Right ventricle myocardium inferior (tissue), 1 donor: ENCODE measurements at regions of chr10 and their contacts with region 1.

Region 1: GRCh38 chr10:73644015-73644743 is 2.9 kb upstream of the MYOZ1 start:
- DNase-seq: no peak
- ATAC-seq: peak; percentile 31

Region 2: DNA sequence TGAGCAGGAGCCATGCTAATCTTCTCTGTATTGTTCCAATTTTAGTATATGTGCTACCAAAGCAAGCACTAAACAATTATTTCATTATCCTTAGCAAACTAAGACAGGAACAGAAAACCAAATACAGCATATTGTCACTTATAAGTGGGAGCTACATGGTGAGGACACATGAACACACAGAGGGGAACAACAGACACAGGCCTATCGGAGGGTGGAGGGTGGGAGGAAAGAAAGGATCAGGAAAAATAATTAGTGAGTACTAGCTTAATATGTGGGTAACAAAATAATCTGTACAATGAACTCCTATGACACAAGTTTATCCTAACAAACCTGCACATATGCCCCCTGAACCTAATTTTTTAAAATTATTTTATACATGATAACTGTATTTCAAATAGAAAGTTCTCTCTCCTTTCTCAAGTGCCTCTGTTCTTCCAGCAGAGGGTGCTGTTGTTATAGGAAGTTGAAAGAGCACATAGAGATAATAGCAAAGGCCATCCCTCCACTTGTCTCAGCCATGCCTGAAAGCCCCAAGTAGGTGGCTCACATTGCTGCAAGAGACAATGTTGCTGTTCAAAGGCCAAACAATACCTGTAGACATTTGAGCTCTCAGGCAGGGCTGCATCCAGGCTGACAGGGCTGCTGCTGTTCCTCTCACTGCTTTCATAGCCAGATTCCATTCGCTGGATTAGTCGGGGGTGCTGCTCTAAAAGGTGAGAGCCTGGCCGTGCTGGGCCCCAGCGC is 114.9 kb before region 1 on chr10:
- intact Hi-C with region 1: loop called (anchors 1 kb)
- DNase-seq: no peak
- ATAC-seq: peak; percentile 80

Region 3: GRCh38 chr10:73591935-73592699 is 52.1 kb before region 1 on chr10:
- intact Hi-C with region 1: no loop called
- DNase-seq: no peak
- ATAC-seq: peak; percentile 80

Region 4: DNA sequence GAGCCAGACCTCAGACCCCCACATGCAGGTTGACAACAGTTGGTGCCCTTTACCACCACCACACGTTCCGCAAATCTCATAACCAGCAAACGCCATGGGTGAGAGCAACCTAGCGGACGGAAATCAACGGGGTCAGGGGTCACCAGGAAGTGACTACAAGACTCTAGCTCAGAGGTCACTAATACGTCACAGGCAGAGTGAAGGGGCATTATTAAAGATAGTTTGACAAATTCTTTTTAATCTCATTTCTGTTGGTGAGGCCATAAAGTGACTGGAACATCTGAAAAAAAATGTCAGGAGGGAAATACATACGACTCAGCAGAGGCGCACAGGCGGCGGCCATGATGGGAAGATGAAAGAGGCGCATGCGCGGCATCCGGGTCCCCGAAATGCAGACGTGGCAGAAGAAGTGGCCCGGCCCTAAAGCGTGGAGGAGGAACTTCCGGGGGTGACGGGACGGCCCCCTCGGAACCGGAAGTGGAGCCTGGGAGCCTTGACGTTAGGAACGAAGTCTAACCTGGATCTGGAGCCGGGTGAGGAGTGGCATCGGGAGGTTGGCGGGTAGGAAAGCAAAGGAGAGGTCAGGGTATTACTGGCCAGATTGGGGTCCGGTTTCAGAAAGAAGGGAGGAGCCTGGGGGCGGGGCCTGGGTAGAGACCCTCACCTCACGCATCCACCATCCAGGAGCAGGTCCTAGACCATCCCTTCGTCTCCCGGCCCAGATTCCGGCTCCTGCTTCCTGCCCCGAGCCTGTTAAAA is 99.9 kb after region 1 on chr10 and contains the start of gene SEC24C:
- intact Hi-C with region 1: loop called (anchors 5 kb)
- DNase-seq: peak; percentile 98
- ATAC-seq: peak; percentile 96
- total RNA-seq, gene SEC24C: 46.4 TPM

Region 5: DNA sequence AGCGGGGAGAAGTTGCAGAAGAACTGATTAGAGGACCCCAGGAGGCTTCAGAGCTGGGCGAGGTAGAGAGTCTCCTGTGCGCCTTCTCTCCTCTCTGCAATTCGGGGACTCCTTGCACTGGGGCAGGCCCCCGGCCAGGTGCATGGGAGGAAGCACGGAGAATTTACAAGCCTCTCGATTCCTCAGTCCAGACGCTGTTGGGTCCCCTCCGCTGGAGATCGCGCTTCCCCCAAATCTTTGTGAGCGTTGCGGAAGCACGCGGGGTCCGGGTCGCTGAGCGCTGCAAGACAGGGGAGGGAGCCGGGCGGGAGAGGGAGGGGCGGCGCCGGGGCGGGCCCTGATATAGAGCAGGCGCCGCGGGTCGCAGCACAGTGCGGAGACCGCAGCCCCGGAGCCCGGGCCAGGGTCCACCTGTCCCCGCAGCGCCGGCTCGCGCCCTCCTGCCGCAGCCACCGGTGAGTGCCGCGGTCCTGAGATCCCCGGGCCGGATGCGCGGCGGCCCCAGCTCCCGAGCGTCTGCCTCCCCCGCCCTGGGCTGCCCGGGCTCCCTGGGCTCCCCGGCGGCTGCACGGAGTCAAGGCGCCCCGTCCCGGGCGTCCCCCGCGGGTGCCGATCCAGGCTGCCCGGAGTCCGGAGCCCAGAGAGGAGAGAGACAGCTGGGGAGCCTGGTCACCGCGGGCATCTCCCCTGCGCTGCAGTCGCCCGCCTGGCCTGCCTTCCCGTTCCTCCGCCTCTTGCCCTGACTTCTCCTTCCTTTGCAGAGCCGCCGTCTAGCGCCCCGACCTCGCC is 266.8 kb after region 1 on chr10 and contains the start of gene PLAU:
- intact Hi-C with region 1: no loop called
- DNase-seq: peak; percentile 90
- ATAC-seq: peak; percentile 35
- total RNA-seq, gene PLAU: 8.5 TPM